OCI-LY7 (cell line): ENCODE measurements at regions of chr17 and their contacts with region 1.

Region 1: DNA sequence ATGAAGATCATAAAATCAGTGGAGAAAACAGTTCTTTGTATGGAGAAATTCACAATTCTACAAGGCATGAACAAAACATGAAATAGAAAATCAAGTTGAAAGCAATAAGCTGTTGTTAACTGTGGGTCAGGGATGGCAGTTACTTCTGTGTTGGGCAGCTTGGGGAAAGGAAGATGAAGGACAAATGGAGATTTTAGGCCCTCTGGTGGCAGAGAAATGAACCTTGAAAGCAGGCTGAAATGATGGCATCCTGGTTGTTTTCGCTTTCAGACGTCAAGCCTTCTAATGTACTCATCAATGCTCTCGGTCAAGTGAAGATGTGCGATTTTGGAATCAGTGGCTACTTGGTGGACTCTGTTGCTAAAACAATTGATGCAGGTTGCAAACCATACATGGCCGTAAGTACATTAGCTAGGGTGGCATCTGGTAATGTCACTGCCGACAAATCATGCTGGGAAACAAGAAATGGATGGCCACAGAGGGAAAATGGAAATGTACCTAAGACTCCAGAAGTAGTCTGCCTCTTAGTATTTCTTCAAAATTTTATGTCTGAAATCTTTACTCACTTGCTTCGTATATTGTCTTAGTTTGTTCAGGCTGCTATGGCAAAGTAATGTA is 108.9 kb downstream of the MAP2K6 start:
- DNase-seq: peak; percentile 71
- H3K4me3 ChIP-seq: no peak overlapping the region
- H3K27ac ChIP-seq: no peak overlapping the region
- H3K4me1 ChIP-seq: peaks cover 5% of the 10 kb centered on the region
- CTCF ChIP-seq: peak; percentile 89

Region 2: DNA sequence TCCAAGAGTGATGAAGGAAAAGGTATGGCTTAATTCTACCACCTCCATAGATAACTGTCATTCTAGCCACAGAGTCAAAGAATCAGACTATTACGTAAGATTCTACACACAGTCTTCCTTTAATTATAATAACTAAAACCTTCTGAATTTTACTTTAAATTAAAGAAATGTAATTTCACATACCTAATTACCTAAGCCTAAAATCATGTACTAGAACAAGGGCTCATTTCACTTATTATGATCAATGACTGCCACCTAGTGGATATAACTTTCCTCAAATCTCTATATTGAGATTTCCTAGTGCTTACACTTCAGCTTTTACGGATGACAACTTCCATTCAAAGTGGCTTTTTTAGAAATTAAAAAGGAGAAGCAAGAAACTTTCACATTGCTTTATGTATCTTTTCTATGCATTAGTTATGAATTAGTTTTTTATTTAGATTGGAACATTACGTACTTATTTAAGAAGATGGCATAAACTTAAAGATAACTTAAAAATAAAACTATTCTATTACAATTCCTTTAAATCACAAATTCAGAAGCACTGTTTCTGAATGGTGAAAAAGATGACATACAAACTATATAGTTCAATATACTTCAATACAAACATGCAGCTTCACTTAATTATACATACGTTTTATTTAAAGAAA is 276.5 kb before region 1 on chr17:
- CTCF ChIA-PET with region 1: no interaction called
- POLR2A ChIA-PET with region 1: interaction called, 4 read pairs
- intact Hi-C with region 1: loop called (anchors 2 kb)
- DNase-seq: peak; percentile 73
- H3K4me3 ChIP-seq: no peak overlapping the region
- H3K27ac ChIP-seq: no peak overlapping the region
- H3K4me1 ChIP-seq: no peaks in the 10 kb centered on the region
- CTCF ChIP-seq: peak; percentile 99

Region 3: GRCh38 chr17:69358688-69359596 is 164.4 kb before region 1 on chr17:
- CTCF ChIA-PET with region 1: interaction called, 9 read pairs
- POLR2A ChIA-PET with region 1: interaction called, 6 read pairs
- intact Hi-C with region 1: loop called (anchors 1 kb)
- DNase-seq: peak; percentile 76
- H3K4me3 ChIP-seq: no peak overlapping the region
- H3K27ac ChIP-seq: no peak overlapping the region
- H3K4me1 ChIP-seq: no peaks in the 10 kb centered on the region
- CTCF ChIP-seq: peak; percentile 84

Region 4: DNA sequence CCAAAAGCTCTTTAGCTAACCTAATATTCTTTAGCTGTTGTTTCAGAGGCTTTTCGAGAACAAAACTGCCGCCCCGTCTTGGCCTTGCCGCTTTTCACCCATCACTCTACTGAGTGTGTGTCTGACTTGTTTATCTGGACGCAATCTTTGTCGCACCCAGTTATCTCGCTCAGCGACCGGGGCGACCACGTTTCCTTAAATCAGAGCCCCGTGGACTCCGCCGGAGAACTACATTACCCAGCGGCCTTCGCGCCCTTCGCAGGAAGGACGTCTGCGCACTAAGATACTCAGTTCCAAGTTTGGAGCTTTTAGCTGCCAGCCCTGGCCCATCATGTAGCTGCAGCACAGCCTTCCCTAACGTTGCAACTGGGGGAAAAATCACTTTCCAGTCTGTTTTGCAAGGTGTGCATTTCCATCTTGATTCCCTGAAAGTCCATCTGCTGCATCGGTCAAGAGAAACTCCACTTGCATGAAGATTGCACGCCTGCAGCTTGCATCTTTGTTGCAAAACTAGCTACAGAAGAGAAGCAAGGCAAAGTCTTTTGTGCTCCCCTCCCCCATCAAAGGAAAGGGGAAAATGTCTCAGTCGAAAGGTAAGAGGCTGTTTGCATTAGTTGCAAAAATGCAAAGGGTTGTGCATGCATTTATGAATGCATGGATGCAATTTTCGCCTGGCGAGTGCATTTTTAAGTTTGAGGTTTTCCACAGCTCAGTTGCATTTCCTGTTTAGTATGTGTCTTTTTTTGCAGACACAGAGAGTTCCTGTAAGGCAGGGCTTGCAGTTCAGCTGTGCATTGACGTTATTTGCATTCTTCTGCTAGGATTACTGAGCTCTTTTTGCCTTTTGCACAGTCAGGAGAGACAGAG is 108.7 kb before region 1 on chr17 and contains the start of gene MAP2K6:
- CTCF ChIA-PET with region 1: interaction called, 4 read pairs
- POLR2A ChIA-PET with region 1: interaction called, 6 read pairs
- intact Hi-C with region 1: loop called (anchors 5 kb)
- DNase-seq: peak; percentile 91
- H3K4me3 ChIP-seq: peak within 1 kb of the TSS; percentile 73
- H3K27ac ChIP-seq: peak within 1 kb of the TSS; percentile 68
- H3K4me1 ChIP-seq: peaks cover 36% of the 10 kb centered on the region
- CTCF ChIP-seq: no peak
- total RNA-seq, gene MAP2K6: 8.4 and 10.3 TPM in 2 replicates

Region 5: GRCh38 chr17:70144260-70144846 is 621.0 kb after region 1 on chr17:
- CTCF ChIA-PET with region 1: no interaction called
- POLR2A ChIA-PET with region 1: interaction called, 4 read pairs
- intact Hi-C with region 1: loop called (anchors 1 kb)
- DNase-seq: peak; percentile 56
- H3K4me3 ChIP-seq: no peak overlapping the region
- H3K27ac ChIP-seq: no peak overlapping the region
- H3K4me1 ChIP-seq: no peaks in the 10 kb centered on the region
- CTCF ChIP-seq: peak; percentile 100

Region 6: GRCh38 chr17:70622368-70623260 is 1099.3 kb after region 1 on chr17:
- CTCF ChIA-PET with region 1: no interaction called
- POLR2A ChIA-PET with region 1: no interaction called
- intact Hi-C with region 1: loop called (anchors 5 kb)
- DNase-seq: peak; percentile 49
- H3K4me3 ChIP-seq: no peak overlapping the region
- H3K27ac ChIP-seq: no peak overlapping the region
- H3K4me1 ChIP-seq: no peaks in the 10 kb centered on the region
- CTCF ChIP-seq: peak; percentile 85